ENCODE measurements at regions of chr7 and their contacts with region 1.

Region 1: DNA sequence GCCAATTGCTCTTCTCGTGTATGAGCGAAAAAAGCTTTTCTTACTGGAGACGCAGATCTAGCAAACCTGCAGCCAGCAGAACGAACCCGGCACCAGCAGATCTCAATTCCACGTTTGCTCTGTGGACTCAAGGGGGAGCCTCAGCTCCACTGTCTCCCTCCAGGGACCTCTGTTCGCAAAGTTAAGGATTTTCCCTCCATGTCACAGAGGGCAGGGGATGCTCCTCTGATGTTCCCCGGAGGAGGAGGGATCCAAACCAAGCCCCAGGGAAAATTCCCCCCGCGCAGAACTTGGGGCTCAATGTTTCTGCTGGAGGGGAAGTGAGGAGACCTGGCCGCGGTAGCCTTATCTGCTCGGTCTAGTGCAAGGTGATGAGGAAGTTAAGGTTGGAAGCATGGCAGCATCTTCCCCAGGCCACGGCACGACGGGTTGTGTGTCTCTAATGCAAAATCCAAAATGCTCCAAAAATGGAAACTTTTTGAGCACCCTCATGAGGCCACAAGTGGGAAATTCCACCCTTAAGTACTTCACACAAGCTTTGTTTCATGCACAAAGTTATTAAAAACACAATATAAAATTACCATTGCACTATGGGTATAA is 9.0 kb downstream of the IQCE start:
- DNase-seq: peak; percentile 12
- ATAC-seq: no peak
- H3K4me3 Mint-ChIP-seq: no peak overlapping the region
- H3K27ac Mint-ChIP-seq: no peak overlapping the region
- H3K4me1 Mint-ChIP-seq: peaks cover 25% of the 10 kb centered on the region
- H3K27me3 Mint-ChIP-seq: no peaks in the 10 kb centered on the region

Region 2: GRCh38 chr7:2451171-2452073 is 116.4 kb before region 1 on chr7:
- CTCF ChIA-PET with region 1: no interaction called
- POLR2A ChIA-PET with region 1: no interaction called
- intact Hi-C with region 1: loop called in 1 of 2 experiments (anchors 1 kb)
- DNase-seq: peak; percentile 91
- ATAC-seq: peak; percentile 98
- H3K4me3 Mint-ChIP-seq: no peak overlapping the region
- H3K27ac Mint-ChIP-seq: no peak overlapping the region
- H3K4me1 Mint-ChIP-seq: peaks cover 4% of the 10 kb centered on the region
- H3K27me3 Mint-ChIP-seq: no peaks in the 10 kb centered on the region

Region 3: GRCh38 chr7:2477447-2478398 is 90.1 kb before region 1 on chr7:
- CTCF ChIA-PET with region 1: interaction called, 3 read pairs
- POLR2A ChIA-PET with region 1: no interaction called
- intact Hi-C with region 1: loop called (anchors 2 to 5 kb)
- DNase-seq: peak; percentile 80
- ATAC-seq: peak; percentile 99
- H3K4me3 Mint-ChIP-seq: no peak overlapping the region
- H3K27ac Mint-ChIP-seq: no peak overlapping the region
- H3K4me1 Mint-ChIP-seq: no peaks in the 10 kb centered on the region
- H3K27me3 Mint-ChIP-seq: no peaks in the 10 kb centered on the region

Region 4: DNA sequence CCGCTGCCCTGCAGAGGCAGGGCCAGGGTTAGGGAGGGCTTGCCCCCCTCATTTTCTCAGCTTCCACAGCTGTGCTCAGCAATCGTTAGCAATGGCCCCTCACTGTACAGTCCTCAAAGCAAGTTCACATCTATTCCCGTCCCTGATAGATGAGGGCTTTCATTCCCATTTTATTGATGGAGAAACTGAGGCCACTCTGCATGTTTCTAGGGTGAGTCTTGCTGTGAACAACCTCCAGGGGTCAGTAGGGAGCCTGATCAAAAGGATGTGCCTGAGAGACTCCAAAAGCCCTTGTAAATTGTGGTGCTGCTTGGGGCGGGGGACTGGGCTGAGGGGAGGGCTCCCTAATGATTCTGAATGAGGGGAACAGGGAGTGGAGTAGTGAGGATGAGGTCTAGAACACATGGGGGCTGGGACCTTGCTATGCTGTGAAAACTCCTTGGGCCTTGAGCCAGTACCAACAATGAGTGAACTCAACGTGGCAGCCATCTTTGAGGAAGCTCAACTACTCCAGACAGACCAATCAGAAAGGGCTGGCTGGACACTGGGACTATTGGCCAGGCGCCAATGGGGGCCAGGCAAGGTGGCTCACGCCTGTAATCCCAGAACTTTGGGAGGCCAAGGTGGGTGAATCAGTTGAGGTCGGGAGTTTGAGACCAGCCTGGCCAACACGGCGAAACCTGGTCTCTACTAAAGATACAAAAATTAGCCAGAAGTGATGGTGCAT is 84.9 kb before region 1 on chr7:
- CTCF ChIA-PET with region 1: no interaction called
- POLR2A ChIA-PET with region 1: no interaction called
- intact Hi-C with region 1: loop called in 1 of 2 experiments (anchors 5 kb)
- DNase-seq: no peak
- ATAC-seq: no peak
- H3K4me3 Mint-ChIP-seq: no peak overlapping the region
- H3K27ac Mint-ChIP-seq: no peak overlapping the region
- H3K4me1 Mint-ChIP-seq: no peaks in the 10 kb centered on the region
- H3K27me3 Mint-ChIP-seq: no peaks in the 10 kb centered on the region

Region 5: GRCh38 chr7:2632733-2633537 is 65.2 kb after region 1 on chr7:
- CTCF ChIA-PET with region 1: no interaction called
- POLR2A ChIA-PET with region 1: no interaction called
- intact Hi-C with region 1: loop called in 1 of 2 experiments (anchors 2 kb)
- DNase-seq: peak; percentile 77
- ATAC-seq: peak; percentile 7
- H3K4me3 Mint-ChIP-seq: peak overlapping the region; percentile 91
- H3K27ac Mint-ChIP-seq: peak overlapping the region; percentile 84
- H3K4me1 Mint-ChIP-seq: peaks cover 14% of the 10 kb centered on the region
- H3K27me3 Mint-ChIP-seq: no peaks in the 10 kb centered on the region

Region 6: GRCh38 chr7:2680792-2681490 is 113.2 kb after region 1 on chr7:
- CTCF ChIA-PET with region 1: no interaction called
- POLR2A ChIA-PET with region 1: no interaction called
- intact Hi-C with region 1: loop called in 1 of 2 experiments (anchors 1 kb)
- DNase-seq: peak; percentile 79
- ATAC-seq: peak; percentile 73
- H3K4me3 Mint-ChIP-seq: no peak overlapping the region
- H3K27ac Mint-ChIP-seq: no peak overlapping the region
- H3K4me1 Mint-ChIP-seq: no peaks in the 10 kb centered on the region
- H3K27me3 Mint-ChIP-seq: peaks cover 2% of the 10 kb centered on the region

Measured in activated CD4-positive, alpha-beta T cell treated with anti-CD3 and anti-CD28 coated beads for 36 hours (primary cell).